ENCODE measurements at regions of chr1 and their contacts with region 1.

Region 1: GRCh38 chr1:212455803-212456528 is 23.2 kb downstream of the NENF start:
- DNase-seq: peak; percentile 70
- H3K4me3 Mint-ChIP-seq: no peak overlapping the region
- H3K27ac Mint-ChIP-seq: no peak overlapping the region
- H3K4me1 Mint-ChIP-seq: peaks cover 6% of the 10 kb centered on the region
- H3K27me3 Mint-ChIP-seq: no peaks in the 10 kb centered on the region

Region 2: DNA sequence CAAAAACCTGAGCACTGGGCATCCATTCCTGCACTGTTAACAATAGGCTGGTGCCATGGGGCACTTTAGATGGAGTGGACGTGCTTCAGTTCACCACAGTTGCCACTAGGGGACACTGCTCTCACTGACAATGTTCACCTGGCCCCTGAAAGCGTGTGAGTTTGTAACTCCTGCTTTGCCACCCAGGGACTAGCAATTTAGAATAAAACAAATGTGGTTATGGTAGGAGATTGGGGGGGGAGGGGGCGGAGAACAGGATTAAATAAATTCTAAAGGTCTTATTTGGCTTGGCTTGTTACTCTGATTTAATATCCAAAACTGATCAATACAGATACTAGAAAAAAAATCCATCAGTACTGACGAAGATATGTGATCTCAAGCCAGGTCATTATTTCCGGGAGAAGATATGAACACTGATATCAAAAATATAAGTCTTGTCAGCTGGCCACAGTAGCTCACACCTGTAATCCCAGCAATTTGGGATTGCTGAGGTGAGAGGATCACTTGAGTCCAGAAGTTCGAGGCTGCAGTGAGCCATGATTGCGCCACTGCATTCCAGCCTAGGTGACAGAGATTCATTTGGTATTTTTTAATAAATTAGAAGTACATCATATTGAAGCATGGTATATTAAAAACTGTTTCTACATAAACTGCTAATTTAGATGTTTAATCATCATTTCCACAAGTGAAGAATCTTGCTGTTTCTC is 443.8 kb before region 1 on chr1:
- intact Hi-C with region 1: loop called (anchors 1 kb)
- DNase-seq: peak; percentile 48
- H3K4me3 Mint-ChIP-seq: no peak overlapping the region
- H3K27ac Mint-ChIP-seq: no peak overlapping the region
- H3K4me1 Mint-ChIP-seq: peaks cover 6% of the 10 kb centered on the region
- H3K27me3 Mint-ChIP-seq: no peaks in the 10 kb centered on the region

Region 3: GRCh38 chr1:212062832-212063438 is 393.0 kb before region 1 on chr1:
- intact Hi-C with region 1: loop called (anchors 2 kb)
- DNase-seq: no peak
- H3K4me3 Mint-ChIP-seq: no peak overlapping the region
- H3K27ac Mint-ChIP-seq: no peak overlapping the region
- H3K4me1 Mint-ChIP-seq: peaks cover 17% of the 10 kb centered on the region
- H3K27me3 Mint-ChIP-seq: no peaks in the 10 kb centered on the region

Region 4: DNA sequence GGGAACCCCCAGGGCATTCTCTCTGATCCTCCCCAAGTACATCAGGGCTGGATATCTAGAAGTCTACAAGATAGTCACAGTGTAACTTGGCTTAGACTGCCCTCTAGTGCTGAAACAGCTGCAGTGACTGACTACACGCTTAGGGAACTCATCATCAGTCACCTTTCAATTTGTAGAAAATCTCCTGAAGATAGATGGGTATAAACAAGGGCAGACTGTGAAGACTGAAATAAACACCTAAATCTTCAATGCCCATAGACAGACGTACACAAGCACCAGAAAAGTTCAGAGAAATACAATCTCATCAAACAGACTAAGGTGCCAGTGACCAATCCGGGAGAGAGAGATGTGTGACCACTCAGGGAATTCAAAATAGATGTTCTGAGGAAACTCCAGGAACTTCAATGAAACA is 87.9 kb before region 1 on chr1:
- intact Hi-C with region 1: loop called (anchors 5 kb)
- DNase-seq: peak; percentile 42
- H3K4me3 Mint-ChIP-seq: no peak overlapping the region
- H3K27ac Mint-ChIP-seq: peak overlapping the region; percentile 17
- H3K4me1 Mint-ChIP-seq: peaks cover 4% of the 10 kb centered on the region
- H3K27me3 Mint-ChIP-seq: no peaks in the 10 kb centered on the region

Region 5: DNA sequence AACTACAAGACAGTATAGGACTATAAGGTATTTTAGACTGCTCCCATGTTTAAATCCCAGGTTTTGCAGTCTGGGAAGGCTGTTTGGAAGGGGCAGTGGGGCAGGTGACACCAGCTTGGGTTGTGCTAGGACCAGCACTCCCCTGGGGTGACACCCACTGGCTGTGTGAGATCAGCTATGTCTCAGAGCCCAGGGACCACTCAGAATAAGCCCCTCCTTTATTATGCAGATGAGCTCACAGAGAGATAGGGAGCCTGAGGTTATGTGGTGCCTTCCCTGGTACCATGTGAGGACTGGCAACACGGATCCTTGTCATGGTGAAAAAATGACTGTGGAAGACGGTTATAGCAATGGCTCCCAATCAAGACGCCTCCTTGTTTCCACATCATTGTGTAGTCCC is 47.7 kb after region 1 on chr1:
- intact Hi-C with region 1: no loop called
- DNase-seq: no peak
- H3K4me3 Mint-ChIP-seq: no peak overlapping the region
- H3K27ac Mint-ChIP-seq: no peak overlapping the region
- H3K4me1 Mint-ChIP-seq: no peaks in the 10 kb centered on the region
- H3K27me3 Mint-ChIP-seq: peaks cover 13% of the 10 kb centered on the region

Region 6: DNA sequence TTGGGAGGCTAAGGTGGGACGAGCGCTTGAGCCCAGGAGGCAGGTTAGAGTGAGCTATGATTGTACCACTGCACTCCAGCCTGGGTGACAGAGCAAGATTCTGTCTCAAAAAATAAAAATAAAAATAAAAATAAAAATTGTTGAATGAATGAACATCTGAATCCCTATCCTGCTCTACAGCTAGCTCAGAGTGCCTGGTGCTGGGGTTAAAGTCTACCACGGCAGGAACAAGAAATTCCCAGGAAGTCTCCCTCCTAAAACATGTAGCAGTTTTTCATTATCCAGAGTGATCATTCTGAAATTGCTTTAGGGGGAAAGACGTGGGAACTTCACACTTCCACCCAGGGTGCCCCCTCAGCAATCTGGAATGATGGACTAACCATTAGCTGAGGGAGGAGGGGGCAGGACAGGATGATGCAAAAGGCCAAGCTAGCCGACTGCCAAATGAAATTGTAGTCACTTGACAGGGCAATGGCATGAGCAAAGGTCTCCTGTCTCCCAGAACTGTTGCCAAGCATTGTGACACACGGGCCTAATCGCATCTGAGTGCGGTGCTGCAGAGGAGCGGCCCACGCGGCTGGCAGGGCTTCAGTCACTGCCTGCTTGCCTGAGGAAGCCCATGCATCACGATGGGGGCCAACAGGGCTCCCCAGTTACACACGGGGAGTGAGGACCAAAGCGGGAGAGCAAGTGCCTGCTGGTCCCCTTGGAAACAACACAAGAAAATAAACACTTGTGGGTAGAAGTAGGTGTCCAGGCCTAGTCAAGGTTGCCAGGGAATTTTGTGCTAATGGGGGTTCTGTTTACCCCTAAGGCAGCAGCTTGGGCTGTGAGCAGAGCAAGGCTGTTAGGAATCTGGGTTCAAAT is 62.5 kb after region 1 on chr1:
- intact Hi-C with region 1: no loop called
- DNase-seq: no peak
- H3K4me3 Mint-ChIP-seq: no peak overlapping the region
- H3K27ac Mint-ChIP-seq: no peak overlapping the region
- H3K4me1 Mint-ChIP-seq: no peaks in the 10 kb centered on the region
- H3K27me3 Mint-ChIP-seq: peaks cover 53% of the 10 kb centered on the region